ENCODE measurements at regions of chr3 and their contacts with region 1.

Region 1: GRCh38 chr3:11367143-11367693 is 95.0 kb downstream of the ATG7 start:
- DNase-seq: peak; percentile 96
- H3K4me3 ChIP-seq: no peak overlapping the region
- H3K27ac ChIP-seq: peak overlapping the region; percentile 89
- H3K4me1 ChIP-seq: peaks cover 56% of the 10 kb centered on the region
- H3K27me3 ChIP-seq: no peaks in the 10 kb centered on the region
- CTCF ChIP-seq: no peak

Region 2: GRCh38 chr3:11050666-11051323 is 316.4 kb before region 1 on chr3:
- CTCF ChIA-PET with region 1: interaction called, 11 read pairs
- POLR2A ChIA-PET with region 1: no interaction called
- intact Hi-C with region 1: no loop called
- DNase-seq: no peak
- H3K4me3 ChIP-seq: no peak overlapping the region
- H3K27ac ChIP-seq: no peak overlapping the region
- H3K4me1 ChIP-seq: no peaks in the 10 kb centered on the region
- H3K27me3 ChIP-seq: peaks cover 5% of the 10 kb centered on the region
- CTCF ChIP-seq: no peak

Region 3: DNA sequence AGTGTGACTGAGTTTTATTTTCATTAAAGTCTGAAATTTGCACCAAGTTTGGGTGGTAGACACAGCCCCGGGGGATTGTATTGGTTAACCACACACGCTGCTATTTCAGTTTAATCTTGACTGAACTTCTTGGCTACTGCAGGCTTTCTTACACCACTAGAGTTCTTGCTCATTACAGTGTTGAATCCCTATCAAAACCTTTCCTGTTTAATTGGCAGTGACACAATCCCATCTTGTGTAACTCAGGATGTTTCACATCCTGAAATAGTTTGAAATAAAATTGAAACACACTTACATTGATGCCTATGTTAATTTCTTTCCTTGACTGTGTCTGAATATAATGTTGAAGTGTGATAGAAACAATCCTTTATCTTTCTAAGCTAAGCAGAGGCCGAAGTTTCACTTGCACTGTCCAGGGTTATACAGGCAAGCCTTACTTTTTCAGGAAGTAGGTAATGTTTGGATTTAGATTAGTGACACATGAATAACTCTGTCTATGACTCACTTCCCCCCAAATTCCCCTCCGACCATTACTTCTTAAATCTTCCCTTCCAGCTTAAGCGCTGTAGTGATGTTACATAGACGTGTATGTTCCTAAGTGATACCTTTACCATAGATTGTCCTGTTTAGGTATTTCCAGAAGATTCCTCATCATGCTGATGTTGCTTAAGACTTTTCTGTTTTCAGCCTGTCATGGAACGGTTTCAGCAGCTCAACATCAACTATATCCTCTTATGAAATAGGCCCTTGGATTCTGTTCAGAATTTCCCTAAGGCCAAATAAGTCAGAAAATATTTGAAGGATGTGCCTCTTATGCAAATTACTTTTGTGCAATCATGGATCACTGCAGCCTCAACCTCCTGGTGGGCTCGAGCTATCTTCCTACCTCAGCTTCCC is 78.2 kb before region 1 on chr3:
- CTCF ChIA-PET with region 1: no interaction called
- POLR2A ChIA-PET with region 1: no interaction called
- intact Hi-C with region 1: loop called (anchors 2 kb)
- DNase-seq: peak; percentile 92
- H3K4me3 ChIP-seq: peak overlapping the region; percentile 1
- H3K27ac ChIP-seq: peak overlapping the region; percentile 93
- H3K4me1 ChIP-seq: peaks cover 64% of the 10 kb centered on the region
- H3K27me3 ChIP-seq: no peaks in the 10 kb centered on the region
- CTCF ChIP-seq: no peak

Region 4: DNA sequence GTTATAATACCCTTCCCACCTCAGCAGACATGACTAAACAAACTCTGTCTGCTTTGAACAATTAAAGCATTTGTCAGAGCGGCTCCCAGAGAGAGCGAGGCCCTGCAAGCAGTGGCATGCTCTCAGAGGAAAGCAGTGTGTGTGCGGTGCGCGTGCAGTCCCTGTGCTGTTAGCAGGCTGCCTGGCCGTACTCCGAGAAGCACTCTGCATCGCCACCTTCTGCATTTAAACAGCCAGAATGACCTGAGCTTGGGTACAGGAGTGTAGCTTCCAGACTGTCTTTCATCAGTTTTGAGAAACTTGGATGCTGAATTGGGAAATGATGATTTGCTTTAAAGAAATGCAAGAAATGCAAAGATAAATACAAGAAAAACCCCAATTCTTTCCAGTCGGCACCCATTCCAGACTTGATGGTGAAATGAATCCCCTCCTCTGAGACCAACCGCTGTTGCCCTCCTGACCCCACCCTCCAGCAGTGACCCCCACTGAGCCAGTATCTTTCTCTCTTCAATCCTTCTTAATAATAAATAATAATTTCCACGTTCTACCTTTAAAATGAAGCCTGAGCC is 163.0 kb after region 1 on chr3:
- CTCF ChIA-PET with region 1: no interaction called
- POLR2A ChIA-PET with region 1: no interaction called
- intact Hi-C with region 1: no loop called
- DNase-seq: no peak
- H3K4me3 ChIP-seq: no peak overlapping the region
- H3K27ac ChIP-seq: no peak overlapping the region
- H3K4me1 ChIP-seq: no peaks in the 10 kb centered on the region
- H3K27me3 ChIP-seq: no peaks in the 10 kb centered on the region
- CTCF ChIP-seq: no peak

Region 5: GRCh38 chr3:11643605-11644087 is 276.4 kb after region 1 on chr3 and contains the start of gene VGLL4:
- CTCF ChIA-PET with region 1: no interaction called
- POLR2A ChIA-PET with region 1: no interaction called
- intact Hi-C with region 1: loop called (anchors 5 kb)
- DNase-seq: peak; percentile 97
- H3K4me3 ChIP-seq: peak within 1 kb of the TSS; percentile 78
- H3K27ac ChIP-seq: peak within 1 kb of the TSS; percentile 96
- H3K4me1 ChIP-seq: peaks cover 27% of the 10 kb centered on the region
- H3K27me3 ChIP-seq: no peaks in the 10 kb centered on the region
- CTCF ChIP-seq: peak; percentile 36; the same call in 1 of the 2 replicates
- total RNA-seq, gene VGLL4: 41.2 and 41.4 TPM in 2 replicates

Region 6: DNA sequence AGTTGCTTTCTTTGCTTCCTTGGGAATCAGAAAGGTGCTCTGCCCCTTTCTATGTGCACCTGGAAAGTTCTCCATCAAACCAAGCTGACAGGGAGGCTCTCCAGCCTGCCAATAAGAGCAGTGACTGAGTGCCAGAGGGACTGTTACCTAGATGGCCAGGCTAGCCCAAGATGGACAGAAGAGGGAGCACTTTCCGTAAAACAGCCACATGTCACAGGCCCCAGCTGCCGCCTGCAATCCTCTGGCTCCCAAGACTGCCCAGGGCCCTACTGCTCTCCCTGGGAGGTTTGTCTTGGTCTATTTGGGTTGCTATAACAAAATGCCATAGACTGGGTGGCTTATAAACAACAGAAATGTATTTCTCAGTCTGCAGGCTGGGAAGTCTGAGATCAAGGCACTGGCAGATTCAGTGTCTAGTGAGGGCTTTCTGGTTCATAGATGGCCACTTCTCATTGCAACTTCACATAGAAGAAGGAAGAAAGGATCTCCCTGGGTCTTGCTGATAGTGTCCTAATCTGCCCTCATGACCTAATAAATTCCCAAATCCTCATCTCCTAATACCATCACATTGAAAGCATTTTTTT is 407.2 kb after region 1 on chr3:
- CTCF ChIA-PET with region 1: no interaction called
- POLR2A ChIA-PET with region 1: no interaction called
- intact Hi-C with region 1: no loop called
- DNase-seq: peak; percentile 35
- H3K4me3 ChIP-seq: no peak overlapping the region
- H3K27ac ChIP-seq: no peak overlapping the region
- H3K4me1 ChIP-seq: no peaks in the 10 kb centered on the region
- H3K27me3 ChIP-seq: no peaks in the 10 kb centered on the region
- CTCF ChIP-seq: peak; percentile 49